Activated naive CD4-positive, alpha-beta T cell treated with anti-CD3 and anti-CD28 coated beads for 36 hours (primary cell): ENCODE measurements at regions of chr4 and their contacts with region 1.

Region 1: DNA sequence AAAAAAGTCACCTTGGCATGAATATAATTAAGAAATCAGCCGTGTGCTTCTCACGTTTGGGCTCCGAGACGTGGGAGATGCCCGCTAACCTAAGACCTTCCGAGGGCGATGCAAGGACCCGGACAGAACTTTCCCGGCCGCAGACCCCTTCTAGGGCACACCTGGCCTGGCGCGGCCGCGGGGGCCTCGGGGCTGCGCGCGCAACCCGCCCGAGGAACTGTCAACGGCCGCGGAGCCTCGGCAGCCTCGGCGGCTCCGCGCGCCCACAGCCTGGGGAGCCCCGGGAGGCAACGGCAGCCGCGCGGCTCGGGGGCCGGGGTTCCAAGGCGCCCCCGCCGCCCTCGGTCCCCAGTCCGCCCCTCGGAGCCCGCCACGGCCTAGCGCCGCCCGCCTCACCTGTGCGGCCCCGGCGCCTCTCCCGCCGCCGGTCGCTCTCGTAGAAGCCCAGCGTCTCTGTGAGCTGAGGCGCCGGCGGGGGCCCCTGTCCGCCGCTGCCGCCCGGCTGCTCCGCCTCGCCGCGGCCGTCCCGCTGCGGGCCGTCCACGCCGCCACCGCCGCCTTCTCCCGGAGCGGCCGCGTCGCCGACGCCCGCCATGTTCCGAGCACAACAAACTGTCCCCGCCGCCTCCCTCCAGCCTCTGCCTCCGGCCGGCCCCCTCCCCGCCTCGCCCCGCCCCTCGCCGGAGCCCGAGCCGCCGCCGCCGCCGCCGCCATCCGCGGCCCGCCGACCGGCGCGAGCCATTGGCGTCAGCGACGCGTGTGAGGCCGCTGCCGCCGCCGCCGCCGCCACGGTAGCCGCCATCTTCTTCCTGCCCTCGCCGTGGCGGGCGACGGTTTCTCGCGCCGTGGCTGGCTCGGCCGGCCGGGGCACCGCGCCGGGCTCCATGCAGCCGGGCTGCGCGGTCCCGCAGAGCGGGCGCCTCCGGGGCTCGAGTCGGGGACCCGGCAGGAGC is at the start of gene TAPT1:
- DNase-seq: peak; percentile 79
- H3K4me3 Mint-ChIP-seq: peak within 1 kb of the TSS; percentile 91
- H3K27ac Mint-ChIP-seq: peak within 1 kb of the TSS; percentile 98
- H3K4me1 Mint-ChIP-seq: peaks cover 56% of the 10 kb centered on the region
- H3K27me3 Mint-ChIP-seq: no peaks in the 10 kb centered on the region
- total RNA-seq, gene TAPT1: 48.6 to 48.9 TPM

Region 2: GRCh38 chr4:15756361-15756861 is 469.7 kb before region 1 on chr4:
- CTCF ChIA-PET with region 1: no interaction called
- intact Hi-C with region 1: loop called (anchors 5 kb)
- DNase-seq: peak; percentile 89
- H3K4me3 Mint-ChIP-seq: peak overlapping the region; percentile 54
- H3K27ac Mint-ChIP-seq: peak overlapping the region; percentile 83
- H3K4me1 Mint-ChIP-seq: peaks cover 44% of the 10 kb centered on the region
- H3K27me3 Mint-ChIP-seq: no peaks in the 10 kb centered on the region

Region 3: DNA sequence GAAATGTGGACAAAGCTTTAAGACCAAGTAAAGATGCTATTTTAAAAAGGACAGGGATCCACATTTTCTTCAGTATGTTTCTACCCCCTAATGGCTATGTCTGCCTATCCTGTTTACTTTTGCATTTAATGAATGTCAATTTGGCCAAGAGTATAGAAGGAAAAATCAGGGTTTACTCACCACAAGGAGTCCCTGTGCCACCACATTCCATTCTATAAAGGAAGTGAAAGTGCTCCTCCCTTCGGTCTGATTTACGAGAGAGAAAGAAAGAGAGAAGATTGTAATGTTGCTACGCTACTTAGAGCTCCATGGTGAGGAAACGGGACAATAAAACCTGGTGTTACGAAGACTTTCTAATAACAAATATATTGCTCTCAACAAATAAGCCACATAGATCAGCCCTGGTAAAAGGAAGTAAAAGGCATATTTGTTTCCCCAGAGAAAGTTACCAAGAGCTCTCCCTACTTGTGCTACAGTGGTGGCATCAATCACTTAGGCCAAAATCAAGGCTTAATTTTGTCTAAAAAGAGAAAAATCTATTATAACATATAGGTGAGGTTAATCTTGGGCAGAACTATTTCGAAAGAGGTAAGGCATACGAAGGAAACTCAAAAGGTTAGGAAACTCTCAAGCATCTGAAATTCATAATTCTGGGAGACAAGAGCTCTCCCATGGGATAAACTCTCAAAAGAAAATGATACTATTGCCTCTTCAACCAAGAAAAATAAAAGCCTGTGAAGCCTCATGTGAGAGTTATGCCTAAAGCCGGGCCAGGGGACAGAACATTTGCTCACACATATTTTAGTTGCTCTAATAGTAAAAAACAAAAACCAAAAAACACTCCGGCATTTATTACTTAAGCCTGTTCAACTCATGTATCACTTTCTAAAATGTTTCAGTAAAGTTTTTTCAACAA is 29.4 kb before region 1 on chr4:
- CTCF ChIA-PET with region 1: interaction called, 4 read pairs
- intact Hi-C with region 1: loop called (anchors 2 kb)
- DNase-seq: no peak
- H3K4me3 Mint-ChIP-seq: no peak overlapping the region
- H3K27ac Mint-ChIP-seq: no peak overlapping the region
- H3K4me1 Mint-ChIP-seq: peaks cover 29% of the 10 kb centered on the region
- H3K27me3 Mint-ChIP-seq: no peaks in the 10 kb centered on the region

Region 4: DNA sequence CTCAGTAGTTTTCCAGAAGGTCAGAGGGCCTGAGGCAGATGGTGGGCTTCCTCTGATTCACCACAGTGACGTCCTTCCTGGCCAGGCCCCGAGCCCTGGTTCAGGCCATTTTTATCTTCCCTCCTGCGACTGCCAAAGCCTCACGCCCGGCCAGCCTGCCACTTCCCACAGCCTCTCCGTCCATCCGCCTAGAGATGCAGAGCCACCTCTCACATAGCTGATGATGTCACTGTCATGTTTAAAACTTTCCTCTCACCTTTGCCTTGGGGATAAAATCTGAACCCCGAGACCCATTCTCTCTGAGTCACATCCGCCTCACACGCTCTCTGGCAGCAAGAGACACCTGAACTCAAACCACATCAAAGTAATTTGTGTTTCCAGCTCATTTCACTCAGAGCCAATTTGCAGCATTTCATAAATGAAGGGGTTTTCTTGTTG is 1110.4 kb after region 1 on chr4:
- CTCF ChIA-PET with region 1: no interaction called
- intact Hi-C with region 1: loop called (anchors 2 kb)
- DNase-seq: peak; percentile 88
- H3K4me3 Mint-ChIP-seq: peak overlapping the region; percentile 22
- H3K27ac Mint-ChIP-seq: peak overlapping the region; percentile 87
- H3K4me1 Mint-ChIP-seq: peaks cover 50% of the 10 kb centered on the region
- H3K27me3 Mint-ChIP-seq: no peaks in the 10 kb centered on the region

Region 5: GRCh38 chr4:17810260-17811077 is 1584.3 kb after region 1 on chr4 and contains the starts of genes DCAF16 and NCAPG:
- CTCF ChIA-PET with region 1: no interaction called
- intact Hi-C with region 1: loop called (anchors 10 kb)
- DNase-seq: peak; percentile 100
- H3K4me3 Mint-ChIP-seq: peak within 1 kb of the TSS; percentile 100
- H3K27ac Mint-ChIP-seq: peak within 1 kb of the TSS; percentile 99
- H3K4me1 Mint-ChIP-seq: peaks cover 41% of the 10 kb centered on the region
- H3K27me3 Mint-ChIP-seq: no peaks in the 10 kb centered on the region
- total RNA-seq, gene DCAF16: 46.6 to 48.5 TPM
- total RNA-seq, gene NCAPG: 70.2 to 78.4 TPM